ENCODE measurements at regions of chr10 and their contacts with region 1.

Region 1: GRCh38 chr10:121608469-121609190 is 10.4 kb upstream of the FGFR2 start:
- DNase-seq: no peak
- H3K4me3 ChIP-seq: peak overlapping the region; percentile 44 to 57 (median 48)
- H3K27ac ChIP-seq: peak overlapping the region in 1 of 4 donors; percentile 56
- H3K4me1 ChIP-seq: peaks cover 5 to 13% (median 9%) of the 10 kb centered on the region in 4 donors
- H3K27me3 ChIP-seq: peaks cover 0 to 14% (median 0%) of the 10 kb centered on the region in 4 donors
- CTCF ChIP-seq: peak; percentile 86 to 97 (median 91)
- EP300 ChIP-seq: no peak
- POLR2A ChIP-seq: no peak

Region 2: DNA sequence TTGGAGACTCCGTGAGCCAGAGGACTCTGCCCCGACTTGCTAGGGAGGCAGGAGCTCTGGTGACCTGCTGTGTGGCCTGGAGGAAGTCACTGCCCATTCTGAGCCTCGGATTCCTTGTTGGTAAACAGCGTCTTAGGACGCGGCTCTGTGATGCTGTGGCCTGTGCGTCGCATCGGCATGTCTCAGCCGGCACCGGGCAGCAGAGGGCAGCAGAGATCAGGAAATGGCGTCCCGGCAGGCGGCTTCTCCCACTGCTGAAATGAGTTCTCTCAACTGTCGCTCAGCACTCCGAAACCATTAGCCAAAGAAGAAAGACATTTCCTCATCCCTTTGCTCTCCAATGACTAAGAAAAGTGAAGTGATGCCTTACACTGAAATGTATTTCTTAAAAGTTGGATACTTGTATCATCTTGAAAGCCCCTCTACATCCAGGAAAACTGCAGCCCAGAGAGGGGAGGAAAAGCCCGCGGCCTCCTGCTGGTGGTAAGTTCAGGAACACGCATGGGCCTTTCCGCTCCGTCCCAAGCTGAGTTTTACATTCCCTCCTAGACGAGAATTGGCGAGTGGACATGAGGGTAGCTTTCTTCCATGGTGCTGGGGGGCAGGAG is 665.7 kb before region 1 on chr10:
- intact Hi-C with region 1: loop called (anchors 2 kb)
- DNase-seq: no peak
- H3K4me3 ChIP-seq: peak overlapping the region in 1 of 4 donors; percentile 15
- H3K27ac ChIP-seq: peak overlapping the region in 1 of 4 donors; percentile 35
- H3K4me1 ChIP-seq: peaks cover 2 to 26% (median 23%) of the 10 kb centered on the region in 4 donors
- H3K27me3 ChIP-seq: peaks cover 0 to 6% (median 0%) of the 10 kb centered on the region in 4 donors
- CTCF ChIP-seq: peak; percentile 85 to 90 (median 90)
- EP300 ChIP-seq: no peak
- POLR2A ChIP-seq: no peak

Region 3: DNA sequence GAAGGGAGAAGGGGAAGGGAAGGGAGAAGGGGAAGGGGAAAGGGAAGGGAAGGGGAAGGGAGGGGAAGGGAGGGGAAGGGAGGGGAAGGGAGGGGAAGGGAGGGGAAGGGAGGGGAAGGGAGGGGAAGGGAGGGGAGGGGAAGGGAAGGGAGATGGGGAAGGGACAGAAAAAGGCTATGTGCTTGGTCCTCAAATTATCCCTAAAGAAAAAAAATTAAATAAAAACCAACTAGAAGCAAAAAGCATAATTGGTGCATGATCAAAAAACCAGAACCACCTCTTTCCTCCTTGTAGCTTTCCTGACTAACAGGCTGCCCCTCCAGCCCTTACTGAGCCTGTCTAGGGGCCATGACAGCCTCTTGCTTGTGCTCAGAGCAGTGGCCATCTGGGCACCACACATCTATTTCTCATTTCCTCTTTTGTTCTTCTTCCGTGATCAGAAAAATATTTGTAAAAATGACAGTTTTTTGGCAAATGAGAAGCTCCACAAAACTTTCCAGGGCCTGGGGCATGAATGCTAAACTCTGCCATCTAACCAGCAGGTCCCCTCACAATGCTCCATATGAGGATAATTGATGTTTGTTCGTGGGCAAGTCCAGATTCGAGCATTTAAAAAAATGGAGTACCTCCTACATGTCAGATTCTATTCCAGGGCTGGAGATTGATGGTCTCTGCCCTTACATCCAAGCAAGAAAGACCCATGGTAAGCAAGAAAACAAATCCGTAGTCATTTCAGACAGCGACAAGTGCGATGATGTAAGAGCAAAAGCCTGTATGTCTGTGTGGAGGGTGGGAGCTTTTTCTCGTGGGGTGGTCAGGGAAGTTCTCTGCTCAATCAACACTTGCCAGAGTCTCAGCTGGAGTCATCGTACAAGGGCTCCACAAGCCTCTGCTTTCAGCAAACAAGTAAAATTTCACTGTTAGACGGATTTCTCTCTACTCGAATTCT is 436.5 kb before region 1 on chr10:
- intact Hi-C with region 1: loop called (anchors 10 kb)
- DNase-seq: no peak
- H3K4me3 ChIP-seq: no peak overlapping the region
- H3K27ac ChIP-seq: peak overlapping the region in 2 of 4 donors; percentile 49 to 50
- H3K4me1 ChIP-seq: peaks cover 0 to 58% (median 34%) of the 10 kb centered on the region in 4 donors
- H3K27me3 ChIP-seq: no peaks in the 10 kb centered on the region
- CTCF ChIP-seq: no peak
- EP300 ChIP-seq: no peak
- POLR2A ChIP-seq: no peak

Region 4: DNA sequence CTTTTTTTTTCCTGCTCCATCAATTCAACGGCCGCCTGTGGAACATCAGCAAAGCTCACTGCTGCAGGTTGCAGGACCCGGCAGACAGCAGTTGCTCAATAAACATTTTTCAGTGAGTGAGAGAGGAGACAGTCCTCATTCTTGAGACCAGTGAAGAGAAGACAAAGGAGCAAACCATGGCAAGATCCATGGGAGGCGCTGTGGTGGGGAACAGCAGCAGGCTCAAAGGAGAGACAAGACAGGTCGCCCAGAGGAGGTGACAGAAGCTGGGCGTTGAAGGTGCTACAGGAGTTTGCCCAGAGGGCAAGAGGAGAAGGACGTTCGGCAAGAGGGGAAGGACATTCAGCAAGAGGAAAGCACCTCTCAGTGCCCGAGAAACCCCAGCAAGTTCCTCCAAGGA is 64.1 kb after region 1 on chr10:
- intact Hi-C with region 1: loop called (anchors 5 kb)
- DNase-seq: no peak
- H3K4me3 ChIP-seq: no peak overlapping the region
- H3K27ac ChIP-seq: no peak overlapping the region
- H3K4me1 ChIP-seq: peaks cover 14 to 33% (median 28%) of the 10 kb centered on the region in 4 donors
- H3K27me3 ChIP-seq: no peaks in the 10 kb centered on the region
- CTCF ChIP-seq: no peak
- EP300 ChIP-seq: no peak
- POLR2A ChIP-seq: no peak

Region 5: DNA sequence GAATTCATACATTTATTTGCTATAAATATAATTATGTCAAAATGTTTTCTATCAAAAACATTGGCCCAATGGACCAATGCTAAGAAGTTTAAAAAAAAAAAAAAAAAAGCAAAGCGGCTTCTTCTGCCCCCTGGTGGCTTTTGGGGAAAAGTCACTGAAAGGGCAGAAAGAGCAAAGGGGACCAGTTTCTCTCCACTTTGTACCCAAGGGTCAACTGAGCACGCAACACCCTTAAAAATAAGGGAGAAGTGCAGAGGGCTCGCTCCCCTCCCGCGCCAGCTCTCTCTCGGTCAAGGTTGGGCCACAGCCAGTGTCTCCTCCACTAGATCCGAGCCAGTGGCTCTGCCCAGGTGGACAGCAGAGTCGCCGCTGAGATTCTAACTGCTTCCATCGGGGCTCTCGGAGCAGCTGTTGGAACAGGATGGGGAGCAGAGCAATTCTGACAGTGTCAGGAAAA is 126.0 kb after region 1 on chr10:
- intact Hi-C with region 1: loop called (anchors 5 kb)
- DNase-seq: no peak
- H3K4me3 ChIP-seq: no peak overlapping the region
- H3K27ac ChIP-seq: no peak overlapping the region
- H3K4me1 ChIP-seq: peaks cover 0 to 6% (median 4%) of the 10 kb centered on the region in 4 donors
- H3K27me3 ChIP-seq: peaks cover 0 to 4% (median 0%) of the 10 kb centered on the region in 4 donors
- CTCF ChIP-seq: peak; percentile 52 to 80 (median 71)
- EP300 ChIP-seq: no peak
- POLR2A ChIP-seq: no peak

Region 6: GRCh38 chr10:121900443-121901174 is 292.0 kb after region 1 on chr10:
- intact Hi-C with region 1: loop called (anchors 10 kb)
- DNase-seq: no peak
- H3K4me3 ChIP-seq: no peak overlapping the region
- H3K27ac ChIP-seq: no peak overlapping the region
- H3K4me1 ChIP-seq: peaks cover 0 to 8% (median 3%) of the 10 kb centered on the region in 4 donors
- H3K27me3 ChIP-seq: no peaks in the 10 kb centered on the region
- CTCF ChIP-seq: peak; percentile 57 to 71 (median 66)
- EP300 ChIP-seq: no peak
- POLR2A ChIP-seq: no peak

Measured in esophagus muscularis mucosa (tissue), 4 donors.